ENCODE measurements at regions of chr19 and their contacts with region 1.

Region 1: GRCh38 chr19:49766007-49766937 is 529 bp upstream of the AP2A1 start:
- DNase-seq: peak; percentile 99
- ATAC-seq: peak; percentile 93
- H3K4me3 Mint-ChIP-seq: peak overlapping the region; percentile 94
- H3K27ac Mint-ChIP-seq: peak overlapping the region; percentile 93
- H3K4me1 Mint-ChIP-seq: peaks cover 36% of the 10 kb centered on the region
- H3K27me3 Mint-ChIP-seq: no peaks in the 10 kb centered on the region

Region 2: GRCh38 chr19:49118565-49119410 is 647.5 kb before region 1 on chr19 and contains the start of gene C19orf73:
- CTCF ChIA-PET with region 1: no interaction called
- POLR2A ChIA-PET with region 1: no interaction called
- intact Hi-C with region 1: loop called in 1 of 2 experiments (anchors 1 kb)
- DNase-seq: peak; percentile 98
- ATAC-seq: peak; percentile 85
- H3K4me3 Mint-ChIP-seq: peak within 1 kb of the TSS; percentile 80
- H3K27ac Mint-ChIP-seq: peak within 1 kb of the TSS; percentile 84
- H3K4me1 Mint-ChIP-seq: peaks cover 28% of the 10 kb centered on the region
- H3K27me3 Mint-ChIP-seq: peaks cover 8% of the 10 kb centered on the region
- total RNA-seq, gene C19orf73: 1.7 to 2.0 TPM

Region 3: DNA sequence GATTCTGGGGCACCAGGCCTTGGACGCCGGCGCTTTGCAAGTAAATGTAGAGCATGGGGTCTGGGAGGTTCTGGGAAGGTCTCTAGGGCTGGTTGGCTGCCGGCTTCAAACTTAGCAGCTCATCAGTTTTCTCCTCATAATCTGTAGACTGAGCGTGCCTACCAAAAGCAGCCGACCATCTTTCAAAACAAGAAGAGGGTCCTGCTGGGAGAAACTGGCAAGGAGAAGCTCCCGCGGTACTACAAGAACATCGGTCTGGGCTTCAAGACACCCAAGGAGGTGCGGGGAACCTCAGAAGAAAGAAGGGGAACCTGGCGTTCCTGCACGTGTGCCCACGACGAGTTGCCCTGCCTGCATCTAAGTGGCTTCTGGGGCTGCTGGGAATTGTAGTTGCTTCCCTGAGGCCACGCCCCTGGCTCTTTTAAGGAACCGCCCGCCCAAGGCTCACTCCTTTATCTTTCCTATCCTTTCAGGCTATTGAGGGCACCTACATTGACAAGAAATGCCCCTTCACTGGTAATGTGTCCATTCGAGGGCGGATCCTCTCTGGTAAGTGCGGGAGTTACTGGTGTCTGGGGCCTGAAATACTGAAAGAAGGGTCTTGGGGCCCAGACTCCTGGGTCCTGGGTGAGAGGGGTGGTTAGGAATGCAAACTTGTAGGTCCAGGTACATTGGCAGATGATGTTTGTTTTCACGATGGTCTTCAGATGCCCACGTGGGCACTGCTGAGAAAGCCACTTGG is 269.1 kb before region 1 on chr19:
- CTCF ChIA-PET with region 1: no interaction called
- POLR2A ChIA-PET with region 1: no interaction called
- intact Hi-C with region 1: loop called in 1 of 2 experiments (anchors 1 kb)
- DNase-seq: peak; percentile 86
- ATAC-seq: peak; percentile 5
- H3K4me3 Mint-ChIP-seq: peak overlapping the region; percentile 93
- H3K27ac Mint-ChIP-seq: peak overlapping the region; percentile 98
- H3K4me1 Mint-ChIP-seq: peaks cover 47% of the 10 kb centered on the region
- H3K27me3 Mint-ChIP-seq: no peaks in the 10 kb centered on the region

Region 4: DNA sequence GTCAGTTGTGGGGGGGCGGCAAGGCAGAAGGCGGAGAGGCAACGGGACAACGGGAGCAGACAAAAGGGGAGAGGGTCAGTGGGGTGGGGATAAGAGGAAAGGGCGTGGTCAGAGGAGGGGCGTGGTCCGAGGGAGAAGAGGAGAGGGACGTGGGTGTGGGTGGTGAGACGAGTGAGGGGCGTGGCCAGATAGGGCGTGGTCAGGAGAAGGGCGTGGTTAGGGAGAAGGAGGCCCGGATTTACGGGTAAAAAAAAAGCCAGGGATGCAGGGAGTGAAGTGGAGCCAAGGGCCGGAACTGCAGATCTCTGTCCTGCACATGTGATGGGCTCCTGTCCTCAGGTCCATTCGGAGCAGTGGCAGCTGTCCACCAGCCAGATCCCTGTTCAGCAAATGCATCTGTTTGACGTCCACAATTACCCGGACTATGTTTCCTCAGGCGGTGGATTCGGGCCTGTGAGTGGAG is 53.8 kb before region 1 on chr19:
- CTCF ChIA-PET with region 1: no interaction called
- POLR2A ChIA-PET with region 1: interaction called, 3 read pairs
- intact Hi-C with region 1: loop called in 1 of 2 experiments (anchors 2 kb)
- DNase-seq: no peak
- ATAC-seq: no peak
- H3K4me3 Mint-ChIP-seq: no peak overlapping the region
- H3K27ac Mint-ChIP-seq: no peak overlapping the region
- H3K4me1 Mint-ChIP-seq: peaks cover 6% of the 10 kb centered on the region
- H3K27me3 Mint-ChIP-seq: no peaks in the 10 kb centered on the region

Region 5: DNA sequence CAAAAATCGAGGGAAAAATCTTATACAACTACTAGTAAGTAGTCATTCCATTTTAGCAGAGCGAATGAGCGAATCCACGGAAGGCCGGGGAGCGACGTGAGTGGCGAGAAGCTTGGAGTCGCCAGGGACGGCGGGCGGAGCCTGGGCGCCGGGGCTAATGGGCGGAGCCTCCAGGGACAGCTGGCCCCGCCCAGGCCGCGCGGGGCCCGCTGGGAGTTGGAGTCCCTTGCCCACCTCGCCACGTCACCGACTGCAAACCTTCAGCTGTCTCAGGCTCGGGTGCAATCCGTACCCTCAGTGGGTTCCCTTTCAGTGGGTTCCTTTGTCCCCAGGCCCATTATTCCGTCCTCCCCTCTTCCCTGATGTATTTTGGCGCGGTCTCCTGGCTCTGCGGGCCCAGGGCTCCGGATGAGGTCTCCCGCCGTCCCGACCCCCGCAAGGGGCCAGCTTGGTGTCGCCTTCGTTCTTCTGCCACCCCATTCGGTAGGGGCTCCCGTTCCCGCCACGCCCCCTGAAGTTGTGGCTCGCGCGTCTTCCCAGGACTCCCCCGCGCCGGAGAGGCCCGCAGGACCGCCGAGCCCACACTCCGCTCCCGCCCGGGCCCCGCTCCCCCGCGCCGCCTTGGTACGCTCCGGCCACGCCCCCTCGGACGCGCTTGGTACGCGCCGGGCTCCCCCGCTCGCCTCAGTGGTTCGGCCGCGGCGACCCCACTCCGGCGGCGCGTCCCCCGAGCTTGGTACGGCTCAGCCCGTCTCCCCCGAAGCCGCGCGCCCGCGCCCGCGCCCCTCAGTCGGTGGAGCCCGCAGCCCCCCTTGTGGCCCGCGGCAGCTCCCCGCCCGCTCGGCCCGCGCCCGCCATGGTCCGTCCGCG is 84.4 kb after region 1 on chr19 and contains the start of gene PTOV1:
- CTCF ChIA-PET with region 1: no interaction called
- POLR2A ChIA-PET with region 1: no interaction called
- intact Hi-C with region 1: loop called in 1 of 2 experiments (anchors 1 kb)
- DNase-seq: peak; percentile 95
- ATAC-seq: peak; percentile 91
- H3K4me3 Mint-ChIP-seq: peak within 1 kb of the TSS; percentile 85
- H3K27ac Mint-ChIP-seq: peak within 1 kb of the TSS; percentile 91
- H3K4me1 Mint-ChIP-seq: peaks cover 36% of the 10 kb centered on the region
- H3K27me3 Mint-ChIP-seq: no peaks in the 10 kb centered on the region
- total RNA-seq, gene PTOV1: 76.9 to 104 TPM

Region 6: DNA sequence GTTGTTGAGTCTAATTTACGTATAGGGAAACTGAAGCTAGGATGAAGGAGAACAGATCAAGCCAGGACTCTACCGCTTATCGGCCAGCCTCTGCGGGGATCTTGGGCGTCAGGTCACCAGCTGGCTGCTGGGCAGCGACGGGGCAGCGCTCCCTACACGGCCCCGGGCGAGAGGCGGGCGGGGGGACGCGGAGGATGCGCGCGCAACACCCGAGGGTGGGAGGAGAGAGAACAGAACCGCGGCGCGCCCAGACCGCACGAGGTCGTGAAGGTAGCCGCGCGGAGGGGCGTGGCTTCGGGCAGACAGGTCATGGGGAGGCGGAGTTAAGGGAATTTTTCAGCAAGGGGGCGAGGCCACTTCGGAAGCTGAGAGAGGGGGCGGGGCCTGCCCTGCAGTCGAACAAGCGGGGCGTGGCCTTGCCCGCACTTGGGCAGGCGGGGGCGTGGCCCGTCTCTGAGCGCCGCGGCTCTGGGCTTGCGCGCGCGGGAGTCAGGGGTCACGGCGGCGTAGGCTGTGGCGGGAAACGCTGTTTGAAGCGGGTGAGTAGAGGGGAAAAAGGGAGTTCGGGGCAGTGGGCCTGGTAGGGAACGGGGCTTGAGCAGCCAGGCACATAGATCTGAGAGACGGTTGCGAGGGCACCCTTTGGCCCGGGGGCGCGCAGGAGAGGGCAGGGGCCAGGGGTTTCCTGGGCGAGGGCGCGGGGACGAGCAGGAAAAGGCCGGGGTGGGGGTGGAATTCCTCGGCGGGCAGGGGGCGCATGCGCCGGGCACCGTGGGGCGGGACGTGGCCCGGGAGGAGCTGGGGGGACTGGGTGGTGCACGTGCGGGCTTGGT is 617.8 kb after region 1 on chr19 and contains the start of gene POLD1:
- CTCF ChIA-PET with region 1: no interaction called
- POLR2A ChIA-PET with region 1: no interaction called
- intact Hi-C with region 1: loop called in 1 of 2 experiments (anchors 1 kb)
- DNase-seq: peak; percentile 100
- ATAC-seq: peak; percentile 92
- H3K4me3 Mint-ChIP-seq: peak within 1 kb of the TSS; percentile 99
- H3K27ac Mint-ChIP-seq: peak within 1 kb of the TSS; percentile 93
- H3K4me1 Mint-ChIP-seq: peaks cover 27% of the 10 kb centered on the region
- H3K27me3 Mint-ChIP-seq: no peaks in the 10 kb centered on the region
- total RNA-seq, gene POLD1: 220 to 227 TPM

Measured in activated CD4-positive, alpha-beta T cell treated with anti-CD3 and anti-CD28 coated beads for 36 hours (primary cell).